K562 (cell line): ENCODE measurements at regions of chr17 and their contacts with region 1.

Region 1: DNA sequence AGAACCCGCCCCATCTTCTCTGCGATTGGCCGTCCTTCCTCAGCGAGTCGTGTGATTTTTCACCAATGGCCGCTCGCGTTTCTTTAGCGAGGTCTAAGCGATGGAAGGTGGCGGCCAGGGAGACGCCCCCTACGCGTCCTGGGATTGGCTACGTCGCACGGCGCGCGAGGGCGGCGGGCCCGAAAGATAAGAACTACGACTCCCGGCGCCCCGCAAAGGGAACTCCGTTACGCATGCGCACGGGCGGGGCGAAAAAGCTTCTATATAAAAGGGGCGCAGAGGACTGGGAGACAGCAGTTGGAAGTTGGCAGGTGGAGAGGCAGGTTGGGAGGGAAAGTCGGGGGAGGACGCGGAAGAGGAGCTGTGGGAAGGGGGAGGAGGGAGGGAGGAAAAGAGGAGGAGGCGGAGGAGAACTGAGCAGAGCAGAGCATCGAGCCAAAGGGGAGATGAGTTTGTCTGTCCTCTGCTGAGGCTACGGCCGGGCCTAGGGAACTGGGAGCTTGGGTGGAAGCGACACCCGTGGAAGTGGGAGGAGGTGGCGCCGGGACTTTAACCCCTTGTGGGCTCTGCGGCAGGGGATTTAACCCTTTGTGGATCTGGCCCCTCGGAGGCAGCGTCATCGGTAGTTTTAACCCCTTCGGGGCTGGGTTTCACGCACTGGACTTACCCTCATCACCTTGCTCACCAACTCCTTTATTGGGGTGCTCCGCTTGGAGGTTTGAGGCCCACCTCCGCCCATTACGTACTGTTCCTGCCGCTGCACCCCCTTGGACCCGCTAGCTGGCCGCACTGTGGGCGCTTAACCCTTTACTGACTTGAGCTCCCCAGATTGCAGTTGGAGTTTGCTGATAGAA is at the start of gene HEXIM1:
- DNase-seq: peak; percentile 95 to 100 (median 97)
- ATAC-seq: peak; percentile 77
- H3K4me3 ChIP-seq: peak within 1 kb of the TSS; percentile 69
- H3K27ac ChIP-seq: peak within 1 kb of the TSS; percentile 97
- H3K4me1 ChIP-seq: peaks cover 39 to 48% of the 10 kb centered on the region in 2 experiments
- H3K27me3 ChIP-seq: no peaks in the 10 kb centered on the region
- CTCF ChIP-seq: peak in 2 of 3 experiments; percentile 0 to 2; a peak in 1 of 6 replicates
- EP300 ChIP-seq: no peak
- POLR2A ChIP-seq: peak; percentile 100
- RAD21 ChIP-seq: 0 out of 4 replicates have a peak, but pooled peaks of 1 of the 2 experiments have one; percentile 10
- polyA plus RNA-seq, gene HEXIM1: 1.4 to 1.6 TPM

Region 2: GRCh38 chr17:44988044-44988942 is 160.1 kb before region 1 on chr17:
- CTCF ChIA-PET with region 1: no interaction called
- POLR2A ChIA-PET with region 1: no interaction called
- in situ Hi-C with region 1: no loop called
- intact Hi-C with region 1: no loop called
- DNase-seq: no peak
- ATAC-seq: no peak
- H3K4me3 ChIP-seq: no peak overlapping the region
- H3K27ac ChIP-seq: no peak overlapping the region
- H3K4me1 ChIP-seq: peaks cover 0 to 5% of the 10 kb centered on the region in 2 experiments; a peak in 2 of 5 replicates
- H3K27me3 ChIP-seq: peaks cover 37 to 59% of the 10 kb centered on the region in 2 experiments; a peak in 4 of 5 replicates
- CTCF ChIP-seq: no peak
- EP300 ChIP-seq: no peak
- POLR2A ChIP-seq: no peak
- RAD21 ChIP-seq: no peak

Region 3: GRCh38 chr17:45092932-45093430 is 55.4 kb before region 1 on chr17:
- CTCF ChIA-PET with region 1: no interaction called
- POLR2A ChIA-PET with region 1: no interaction called
- in situ Hi-C with region 1: no loop called
- intact Hi-C with region 1: no loop called
- DNase-seq: no peak
- ATAC-seq: no peak
- H3K4me3 ChIP-seq: no peak overlapping the region
- H3K27ac ChIP-seq: no peak overlapping the region
- H3K4me1 ChIP-seq: no peaks in the 10 kb centered on the region
- H3K27me3 ChIP-seq: no peaks in the 10 kb centered on the region
- CTCF ChIP-seq: no peak
- EP300 ChIP-seq: no peak
- POLR2A ChIP-seq: no peak; the same call in 1 of the 2 replicates
- RAD21 ChIP-seq: no peak

Region 4: GRCh38 chr17:45108595-45109521 is 39.6 kb before region 1 on chr17:
- CTCF ChIA-PET with region 1: no interaction called
- POLR2A ChIA-PET with region 1: interaction called, 17 read pairs
- in situ Hi-C with region 1: no loop called
- intact Hi-C with region 1: no loop called
- DNase-seq: no peak
- ATAC-seq: peak; percentile 27; the same call in 2 of the 3 replicates
- H3K4me3 ChIP-seq: no peak overlapping the region
- H3K27ac ChIP-seq: no peak overlapping the region
- H3K4me1 ChIP-seq: peaks cover 0 to 7% of the 10 kb centered on the region in 2 experiments; a peak in 1 of 5 replicates
- H3K27me3 ChIP-seq: no peaks in the 10 kb centered on the region
- CTCF ChIP-seq: peak in 1 of 3 experiments; percentile 20; a peak in 1 of 6 replicates
- EP300 ChIP-seq: no peak
- POLR2A ChIP-seq: no peak
- RAD21 ChIP-seq: peak in 1 of 2 experiments; percentile 39; a peak in 2 of 4 replicates

Region 5: GRCh38 chr17:45135192-45135977 is 13.0 kb before region 1 on chr17 and contains the start of gene ACBD4:
- CTCF ChIA-PET with region 1: interaction called, 29 read pairs
- POLR2A ChIA-PET with region 1: interaction called, 119 read pairs
- in situ Hi-C with region 1: no loop called
- intact Hi-C with region 1: loop called (anchors 1 kb)
- DNase-seq: peak; percentile 81 to 98 (median 90)
- ATAC-seq: peak; percentile 90
- H3K4me3 ChIP-seq: peak within 1 kb of the TSS; percentile 52
- H3K27ac ChIP-seq: peak within 1 kb of the TSS; percentile 74; the same call in 2 of the 3 replicates
- H3K4me1 ChIP-seq: peaks cover 11 to 49% of the 10 kb centered on the region in 2 experiments
- H3K27me3 ChIP-seq: no peaks in the 10 kb centered on the region
- CTCF ChIP-seq: peak; percentile 100
- EP300 ChIP-seq: peak; percentile 53; the same call in 1 of the 2 replicates
- POLR2A ChIP-seq: peak; percentile 55; the same call in 1 of the 2 replicates
- RAD21 ChIP-seq: peak; percentile 100
- polyA plus RNA-seq, gene ACBD4: 0.14 to 0.15 TPM

Region 6: GRCh38 chr17:45190503-45191255 is 42.3 kb after region 1 on chr17:
- CTCF ChIA-PET with region 1: no interaction called
- POLR2A ChIA-PET with region 1: interaction called, 58 read pairs
- in situ Hi-C with region 1: no loop called
- intact Hi-C with region 1: no loop called
- DNase-seq: peak in 1 of 4 experiments; percentile 3
- ATAC-seq: no peak
- H3K4me3 ChIP-seq: no peak overlapping the region
- H3K27ac ChIP-seq: no peak overlapping the region
- H3K4me1 ChIP-seq: no peaks in the 10 kb centered on the region
- H3K27me3 ChIP-seq: no peaks in the 10 kb centered on the region; a peak in 2 of 5 replicates
- CTCF ChIP-seq: no peak
- EP300 ChIP-seq: no peak
- POLR2A ChIP-seq: no peak
- RAD21 ChIP-seq: no peak

Region 7: DNA sequence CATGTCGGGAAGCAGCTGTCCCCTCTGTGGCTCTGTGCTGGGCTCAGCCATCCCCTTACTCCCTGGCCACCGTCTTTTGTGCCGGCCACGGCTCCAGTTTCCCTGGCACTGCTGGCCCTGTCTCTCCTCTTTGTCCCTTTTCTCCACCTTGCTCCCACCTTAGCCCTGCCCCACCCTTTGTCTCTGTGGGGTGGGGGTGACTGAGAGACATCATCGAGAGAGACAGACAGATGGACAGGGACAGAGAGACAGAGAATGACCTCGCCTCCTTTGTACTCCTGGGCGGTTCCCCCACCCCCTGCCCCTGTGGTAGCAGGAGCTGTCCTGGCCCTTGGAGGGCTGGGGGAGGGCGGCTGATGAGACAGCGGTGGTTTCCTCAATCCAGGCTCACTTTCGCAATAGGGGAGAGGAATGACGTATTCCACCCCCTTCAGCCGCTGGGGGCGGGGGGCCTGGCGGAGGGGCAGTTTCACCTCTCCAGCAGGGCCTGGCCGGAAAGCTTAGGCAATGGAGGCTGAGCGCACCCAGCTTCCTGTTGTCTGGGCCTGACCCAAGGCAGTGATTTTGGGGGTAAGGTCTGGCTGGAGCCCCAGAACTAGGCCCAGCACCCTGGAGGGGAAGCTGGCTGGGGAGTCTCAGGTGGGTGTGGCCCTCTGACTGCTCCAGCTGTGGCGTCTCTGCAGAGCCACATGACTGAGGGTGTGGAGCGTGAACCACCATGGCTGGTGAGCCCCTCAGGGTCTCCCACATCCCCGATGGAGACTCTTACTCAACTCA is 80.5 kb after region 1 on chr17:
- CTCF ChIA-PET with region 1: no interaction called
- POLR2A ChIA-PET with region 1: interaction called, 92 read pairs
- in situ Hi-C with region 1: no loop called
- intact Hi-C with region 1: no loop called
- DNase-seq: peak; percentile 73 to 91 (median 82)
- ATAC-seq: peak; percentile 72
- H3K4me3 ChIP-seq: no peak overlapping the region
- H3K27ac ChIP-seq: peak overlapping the region; percentile 90
- H3K4me1 ChIP-seq: peaks cover 63 to 81% of the 10 kb centered on the region in 2 experiments
- H3K27me3 ChIP-seq: no peaks in the 10 kb centered on the region
- CTCF ChIP-seq: no peak
- EP300 ChIP-seq: peak; percentile 67
- POLR2A ChIP-seq: no peak
- RAD21 ChIP-seq: no peak